ENCODE measurements at regions of chr2 and their contacts with region 1.

Region 1: GRCh38 chr2:33599175-33599942 is at the start of gene FAM98A:
- DNase-seq: peak; percentile 96 to 98 (median 98)
- ATAC-seq: peak; percentile 96
- H3K4me3 ChIP-seq: peak within 1 kb of the TSS; percentile 92
- H3K4me3 Mint-ChIP-seq: peak within 1 kb of the TSS; percentile 91 to 99 (median 96)
- H3K27ac ChIP-seq: peak within 1 kb of the TSS; percentile 89
- H3K27ac Mint-ChIP-seq: peak within 1 kb of the TSS; percentile 86 to 97 (median 96)
- H3K4me1 ChIP-seq: peaks cover 10 to 14% of the 10 kb centered on the region in 2 donors
- H3K4me1 Mint-ChIP-seq: peaks cover 17 to 45% (median 33%) of the 10 kb centered on the region in 7 donors
- H3K27me3 ChIP-seq: no peaks in the 10 kb centered on the region
- H3K27me3 Mint-ChIP-seq: peaks cover 0 to 4% (median 0%) of the 10 kb centered on the region in 5 donors
- total RNA-seq, gene FAM98A: 16.8 to 36.0 (median 32.6) TPM

Region 2: DNA sequence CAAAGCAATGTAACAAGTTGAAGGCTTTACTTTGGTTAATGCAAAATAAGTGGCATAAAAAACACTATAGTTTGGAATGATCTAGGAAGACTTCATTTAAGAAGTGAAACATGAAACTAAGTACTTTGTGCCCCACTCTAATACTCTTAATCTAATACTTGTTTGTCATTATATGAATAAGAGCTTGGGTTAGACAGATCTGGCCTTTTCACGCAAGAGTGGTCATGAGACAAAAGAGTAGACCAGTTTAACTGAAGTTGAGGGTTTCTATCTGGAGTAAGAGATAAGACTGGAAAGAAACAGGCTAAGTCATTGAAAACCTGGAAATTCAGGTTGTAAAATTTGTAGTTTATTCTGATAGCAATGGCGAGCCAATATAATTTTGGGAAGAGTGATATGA is 1430.8 kb before region 1 on chr2:
- CTCF ChIA-PET with region 1: no interaction called
- POLR2A ChIA-PET with region 1: no interaction called
- intact Hi-C with region 1: loop called in 1 of 2 experiments (anchors 1 kb)
- DNase-seq: no peak
- ATAC-seq: no peak
- H3K4me3 ChIP-seq: no peak overlapping the region
- H3K4me3 Mint-ChIP-seq: no peak overlapping the region
- H3K27ac ChIP-seq: no peak overlapping the region
- H3K27ac Mint-ChIP-seq: peak overlapping the region in 4 of 9 donors; percentile 2 to 25 (median 10)
- H3K4me1 ChIP-seq: no peaks in the 10 kb centered on the region
- H3K4me1 Mint-ChIP-seq: peaks cover 17 to 61% (median 49%) of the 10 kb centered on the region in 7 donors
- H3K27me3 ChIP-seq: no peaks in the 10 kb centered on the region
- H3K27me3 Mint-ChIP-seq: no peaks in the 10 kb centered on the region

Region 3: DNA sequence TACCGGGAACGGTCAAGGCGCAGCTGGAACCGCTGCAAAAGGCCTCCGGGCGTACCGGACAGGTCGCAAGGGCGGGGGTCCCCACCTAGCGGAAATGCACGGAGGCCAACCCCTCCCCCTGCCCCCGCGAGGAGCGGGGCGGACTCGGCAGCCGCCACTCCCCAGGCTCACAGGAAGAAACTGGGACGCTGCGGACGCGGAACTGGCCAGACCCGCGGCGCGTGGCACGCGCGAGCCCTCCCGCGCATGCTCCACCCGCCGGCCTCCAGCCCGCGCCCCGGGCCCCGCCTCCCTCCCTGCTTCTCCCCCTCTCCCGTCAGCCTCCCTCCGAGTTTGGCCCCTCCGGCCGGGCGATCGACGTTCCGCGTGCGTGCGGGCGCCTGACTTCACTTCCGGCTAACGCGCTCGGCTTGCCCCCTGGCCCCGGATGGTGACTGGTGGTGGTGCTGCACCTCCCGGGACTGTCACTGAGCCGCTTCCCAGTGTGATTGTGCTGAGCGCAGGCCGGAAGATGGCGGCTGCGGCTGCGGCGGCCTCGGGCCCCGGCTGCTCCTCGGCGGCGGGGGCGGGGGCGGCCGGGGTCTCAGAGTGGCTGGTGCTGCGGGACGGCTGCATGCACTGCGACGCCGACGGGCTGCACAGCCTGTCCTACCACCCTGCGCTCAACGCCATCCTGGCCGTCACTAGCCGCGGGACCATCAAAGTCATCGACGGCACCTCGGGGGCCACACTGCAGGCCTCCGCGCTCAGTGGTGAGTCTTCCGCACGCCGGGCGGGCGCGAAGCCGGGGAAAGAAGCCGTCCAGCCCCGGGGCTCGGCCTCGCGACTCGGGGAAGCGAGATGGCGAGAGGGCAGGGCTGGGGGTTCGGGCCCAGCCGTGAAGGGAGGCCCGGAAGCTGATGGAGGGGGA is 1242.4 kb before region 1 on chr2 and contains the start of gene BIRC6:
- CTCF ChIA-PET with region 1: no interaction called
- POLR2A ChIA-PET with region 1: no interaction called
- intact Hi-C with region 1: loop called (anchors 1 kb)
- DNase-seq: peak; percentile 74 to 96 (median 82)
- ATAC-seq: peak; percentile 92
- H3K4me3 ChIP-seq: peak within 1 kb of the TSS; percentile 77
- H3K4me3 Mint-ChIP-seq: peak within 1 kb of the TSS; percentile 87 to 98 (median 92)
- H3K27ac ChIP-seq: peak within 1 kb of the TSS; percentile 92
- H3K27ac Mint-ChIP-seq: peak within 1 kb of the TSS; percentile 60 to 98 (median 92)
- H3K4me1 ChIP-seq: peaks cover 6 to 21% of the 10 kb centered on the region in 2 donors
- H3K4me1 Mint-ChIP-seq: peaks cover 29 to 44% (median 36%) of the 10 kb centered on the region in 7 donors
- H3K27me3 ChIP-seq: no peaks in the 10 kb centered on the region
- H3K27me3 Mint-ChIP-seq: no peaks in the 10 kb centered on the region
- total RNA-seq, gene BIRC6: 130 to 159 (median 145) TPM

Region 4: GRCh38 chr2:32946314-32947075 is 652.9 kb before region 1 on chr2 and contains the start of gene LTBP1:
- CTCF ChIA-PET with region 1: no interaction called
- POLR2A ChIA-PET with region 1: no interaction called
- intact Hi-C with region 1: loop called in 1 of 2 experiments (anchors 2 kb)
- DNase-seq: peak; percentile 3 to 66 (median 18)
- ATAC-seq: peak; percentile 80
- H3K4me3 ChIP-seq: peak within 1 kb of the TSS; percentile 56
- H3K4me3 Mint-ChIP-seq: peak within 1 kb of the TSS; percentile 64 to 87 (median 81)
- H3K27ac ChIP-seq: no peak within 1 kb of the TSS
- H3K27ac Mint-ChIP-seq: peak within 1 kb of the TSS in 1 of 9 donors; percentile 55
- H3K4me1 ChIP-seq: no peaks in the 10 kb centered on the region
- H3K4me1 Mint-ChIP-seq: peaks cover 3 to 12% (median 5%) of the 10 kb centered on the region in 7 donors
- H3K27me3 ChIP-seq: peaks cover 0 to 7% of the 10 kb centered on the region in 2 donors
- H3K27me3 Mint-ChIP-seq: peaks cover 22 to 40% (median 36%) of the 10 kb centered on the region in 5 donors
- total RNA-seq, gene LTBP1: 0.29 to 2.1 TPM in 2 of 5 experiments, not detected in the others

Measured in naive thymus-derived CD4-positive, alpha-beta T cell (primary cell).